K562 (cell line): ENCODE measurements at regions of chr10 and their contacts with region 1.

Region 1: DNA sequence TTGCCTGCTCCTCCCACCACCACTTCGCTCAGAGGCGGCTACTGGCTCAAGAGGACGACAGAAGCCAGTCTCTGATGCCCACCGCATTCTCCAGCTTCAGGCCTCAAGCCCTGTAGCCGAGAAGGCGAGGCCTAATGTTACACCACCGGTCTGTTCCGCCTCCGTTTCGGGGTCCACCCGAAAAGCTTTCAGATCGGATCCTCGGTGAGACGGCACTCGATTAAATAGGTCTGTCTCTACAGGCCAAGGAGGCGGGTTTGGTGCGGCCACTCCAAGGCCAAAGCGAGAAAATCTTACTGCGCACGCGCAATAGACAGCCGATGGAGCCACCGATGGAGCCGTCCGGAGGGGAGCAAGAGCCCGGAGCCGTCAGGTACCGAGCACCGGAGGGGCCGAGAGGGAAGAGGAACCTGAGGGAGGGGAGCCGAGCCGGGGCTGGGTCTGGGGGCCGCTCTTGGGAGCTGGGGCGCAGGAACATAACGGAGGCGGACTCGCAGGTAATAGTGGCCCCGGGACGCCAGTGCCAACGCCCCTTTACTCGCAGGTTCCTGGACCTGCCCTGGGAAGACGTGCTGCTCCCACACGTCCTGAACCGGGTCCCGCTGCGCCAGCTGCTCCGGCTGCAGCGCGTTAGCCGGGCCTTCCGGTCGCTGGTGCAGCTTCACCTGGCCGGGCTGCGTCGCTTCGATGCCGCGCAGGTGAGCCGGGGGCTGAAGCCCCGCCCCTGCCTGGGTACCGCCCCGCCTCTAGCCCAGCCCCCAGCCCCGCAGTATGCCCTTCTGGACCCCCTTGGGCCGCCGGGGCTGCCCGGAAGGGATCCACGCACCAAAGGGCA is at the start of gene FBXL15:
- DNase-seq: peak; percentile 76 to 96 (median 84)
- ATAC-seq: peak; percentile 67
- H3K4me3 ChIP-seq: peak within 1 kb of the TSS; percentile 93
- H3K27ac ChIP-seq: peak within 1 kb of the TSS; percentile 80
- H3K4me1 ChIP-seq: peaks cover 12 to 59% of the 10 kb centered on the region in 2 experiments; a peak in 4 of 5 replicates
- H3K27me3 ChIP-seq: no peaks in the 10 kb centered on the region
- CTCF ChIP-seq: no peak
- EP300 ChIP-seq: 0 out of 2 replicates have a peak, but pooled peaks have one; percentile 26
- POLR2A ChIP-seq: peak; percentile 71
- RAD21 ChIP-seq: no peak
- polyA plus RNA-seq, gene FBXL15: 0.08 to 0.31 TPM

Region 2: DNA sequence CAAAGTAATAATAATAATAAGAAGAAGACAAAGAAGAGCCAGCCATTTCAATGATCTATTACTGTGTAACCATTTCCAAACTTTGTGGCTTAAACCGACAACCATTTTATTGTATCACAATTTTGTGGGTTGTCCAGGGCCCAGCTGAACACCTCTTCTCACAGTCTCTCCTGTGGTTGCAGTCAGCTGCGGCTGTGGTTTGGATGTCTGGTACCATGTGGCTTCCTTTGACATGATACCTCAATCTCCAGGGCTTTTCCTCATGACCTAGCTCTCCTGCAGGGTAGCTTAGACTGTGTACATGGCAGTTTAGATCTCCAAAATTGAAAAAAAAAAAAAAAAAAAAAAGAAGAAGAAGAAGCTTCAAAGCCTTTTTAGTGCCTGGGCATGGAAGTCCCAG is 98.1 kb before region 1 on chr10:
- CTCF ChIA-PET with region 1: no interaction called
- POLR2A ChIA-PET with region 1: no interaction called
- in situ Hi-C with region 1: no loop called
- intact Hi-C with region 1: no loop called
- DNase-seq: no peak
- ATAC-seq: no peak
- H3K4me3 ChIP-seq: no peak overlapping the region
- H3K27ac ChIP-seq: no peak overlapping the region
- H3K4me1 ChIP-seq: no peaks in the 10 kb centered on the region; a peak in 2 of 5 replicates
- H3K27me3 ChIP-seq: no peaks in the 10 kb centered on the region
- CTCF ChIP-seq: no peak
- EP300 ChIP-seq: no peak
- POLR2A ChIP-seq: no peak
- RAD21 ChIP-seq: no peak

Region 3: GRCh38 chr10:102368072-102368471 is 53.0 kb before region 1 on chr10:
- CTCF ChIA-PET with region 1: no interaction called
- POLR2A ChIA-PET with region 1: no interaction called
- in situ Hi-C with region 1: no loop called
- intact Hi-C with region 1: no loop called
- DNase-seq: no peak
- ATAC-seq: no peak
- H3K4me3 ChIP-seq: no peak overlapping the region
- H3K27ac ChIP-seq: no peak overlapping the region
- H3K4me1 ChIP-seq: no peaks in the 10 kb centered on the region
- H3K27me3 ChIP-seq: no peaks in the 10 kb centered on the region
- CTCF ChIP-seq: no peak
- EP300 ChIP-seq: no peak
- POLR2A ChIP-seq: no peak
- RAD21 ChIP-seq: no peak

Region 4: GRCh38 chr10:102394079-102394800 is 26.8 kb before region 1 on chr10:
- CTCF ChIA-PET with region 1: interaction called, 3 read pairs
- POLR2A ChIA-PET with region 1: interaction called, 6 read pairs
- in situ Hi-C with region 1: no loop called
- intact Hi-C with region 1: loop called (anchors 1 kb)
- DNase-seq: peak; percentile 87 to 93 (median 90)
- ATAC-seq: peak; percentile 93
- H3K4me3 ChIP-seq: peak overlapping the region; percentile 78
- H3K27ac ChIP-seq: peak overlapping the region; percentile 66
- H3K4me1 ChIP-seq: peaks cover 14 to 40% of the 10 kb centered on the region in 2 experiments; a peak in 4 of 5 replicates
- H3K27me3 ChIP-seq: no peaks in the 10 kb centered on the region
- CTCF ChIP-seq: peak in 1 of 3 experiments; percentile 95; a peak in 1 of 6 replicates
- EP300 ChIP-seq: no peak
- POLR2A ChIP-seq: peak; percentile 59; the same call in 1 of the 2 replicates
- RAD21 ChIP-seq: peak; percentile 76

Region 5: DNA sequence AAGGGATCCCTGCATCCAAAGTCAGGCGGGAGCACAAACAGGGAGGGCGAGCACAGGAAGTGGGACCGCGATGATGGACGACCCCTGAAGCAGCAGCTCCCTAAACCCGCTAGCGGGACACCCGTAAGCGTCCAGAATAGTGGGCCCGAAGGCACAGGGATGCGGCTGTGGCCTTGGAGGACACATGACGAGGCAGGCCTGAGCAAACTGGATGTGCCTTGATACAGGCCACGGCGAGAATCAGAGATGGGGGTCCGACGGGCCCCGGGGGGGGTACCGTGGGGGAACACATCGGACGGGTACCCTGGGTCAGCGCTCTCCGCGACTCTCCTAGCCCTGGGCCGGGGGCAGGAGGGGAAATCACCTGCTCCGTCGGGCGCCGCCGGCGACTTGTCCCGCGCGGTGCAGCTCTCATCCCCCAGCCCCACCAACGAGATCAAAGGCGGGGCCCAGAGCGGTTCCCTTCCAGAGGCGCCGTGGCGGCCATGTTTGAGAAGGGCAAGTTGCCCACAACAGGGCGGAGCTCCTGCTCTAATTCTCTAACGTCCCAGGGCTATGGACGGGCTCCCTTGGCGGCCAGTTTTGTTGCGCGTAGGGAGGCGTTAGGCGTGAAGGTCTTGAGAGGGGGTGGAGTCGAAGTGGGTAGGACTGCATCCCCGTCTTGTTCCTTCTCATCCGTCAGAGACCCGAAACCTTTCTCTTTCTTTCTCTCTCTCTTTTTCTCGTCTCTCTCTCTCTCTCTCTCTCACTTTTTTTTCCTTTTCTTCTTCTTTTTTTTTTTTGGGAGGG is 11.3 kb after region 1 on chr10 and contains the start of gene CUEDC2:
- CTCF ChIA-PET with region 1: no interaction called
- POLR2A ChIA-PET with region 1: interaction called, 34 read pairs
- in situ Hi-C with region 1: no loop called
- intact Hi-C with region 1: no loop called
- DNase-seq: peak; percentile 78 to 97 (median 84)
- ATAC-seq: peak; percentile 85
- H3K4me3 ChIP-seq: peak within 1 kb of the TSS; percentile 55
- H3K27ac ChIP-seq: peak within 1 kb of the TSS; percentile 88
- H3K4me1 ChIP-seq: peaks cover 23 to 31% of the 10 kb centered on the region in 2 experiments
- H3K27me3 ChIP-seq: no peaks in the 10 kb centered on the region
- CTCF ChIP-seq: no peak; a peak in 1 of 6 replicates
- EP300 ChIP-seq: peak; percentile 40; the same call in 1 of the 2 replicates
- POLR2A ChIP-seq: peak; percentile 79
- RAD21 ChIP-seq: no peak
- polyA plus RNA-seq, gene CUEDC2: 8.5 to 17.0 TPM

Region 6: GRCh38 chr10:102450194-102450938 is 29.3 kb after region 1 on chr10:
- CTCF ChIA-PET with region 1: no interaction called
- POLR2A ChIA-PET with region 1: interaction called, 11 read pairs
- in situ Hi-C with region 1: no loop called
- intact Hi-C with region 1: no loop called
- DNase-seq: peak; percentile 74 to 86 (median 77)
- ATAC-seq: peak; percentile 71
- H3K4me3 ChIP-seq: peak overlapping the region; percentile 80
- H3K27ac ChIP-seq: peak overlapping the region; percentile 95
- H3K4me1 ChIP-seq: peaks cover 27 to 40% of the 10 kb centered on the region in 2 experiments
- H3K27me3 ChIP-seq: no peaks in the 10 kb centered on the region
- CTCF ChIP-seq: no peak
- EP300 ChIP-seq: no peak
- POLR2A ChIP-seq: peak; percentile 69
- RAD21 ChIP-seq: 0 out of 4 replicates have a peak, but pooled peaks of 1 of the 2 experiments have one; percentile 7

Region 7: DNA sequence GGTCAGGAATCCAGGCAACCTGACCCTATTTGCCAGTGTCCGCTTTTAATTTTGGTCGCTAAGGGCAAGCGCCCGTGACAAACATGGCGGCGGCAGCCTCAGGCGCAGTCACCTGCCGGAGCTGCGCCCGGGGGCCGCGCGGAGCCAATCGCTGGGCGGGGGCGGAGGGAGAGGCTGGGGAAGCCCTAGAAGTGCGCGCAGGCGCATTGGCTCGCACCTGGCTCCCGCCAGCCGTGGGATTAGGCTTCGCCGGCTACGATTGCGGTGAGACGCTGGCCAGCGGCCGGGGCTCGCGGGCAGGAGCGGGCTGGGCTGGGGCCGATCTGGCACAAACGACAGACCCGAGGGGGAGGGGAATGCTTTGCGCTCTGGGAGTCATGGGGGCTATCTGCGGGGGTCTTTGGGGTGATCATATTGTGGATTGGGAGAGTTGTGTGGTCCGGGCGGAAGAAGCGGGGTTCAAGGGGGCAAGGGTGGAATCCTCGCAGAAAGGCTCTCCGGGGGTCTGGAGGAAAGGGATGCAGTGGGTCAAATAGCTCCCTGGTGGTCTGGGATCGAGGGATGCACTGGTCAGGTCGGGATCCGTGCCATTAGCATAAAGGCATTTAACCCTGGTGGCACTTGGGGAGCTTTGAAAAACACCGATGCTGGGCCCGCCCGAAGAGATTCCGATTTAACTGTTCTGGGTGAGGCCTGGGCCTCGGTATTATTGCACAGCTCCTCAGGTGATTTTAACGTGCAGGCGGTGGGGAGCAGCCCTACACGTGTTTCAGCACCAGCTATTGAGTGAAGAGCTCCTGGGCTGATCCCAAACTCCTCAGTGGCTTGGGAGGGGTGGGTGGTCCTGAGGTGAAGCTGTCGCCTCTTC is 40.4 kb after region 1 on chr10:
- CTCF ChIA-PET with region 1: no interaction called
- POLR2A ChIA-PET with region 1: interaction called, 4 read pairs
- in situ Hi-C with region 1: no loop called
- intact Hi-C with region 1: loop called (anchors 5 kb)
- DNase-seq: peak; percentile 94 to 97 (median 96)
- ATAC-seq: peak; percentile 91
- H3K4me3 ChIP-seq: peak overlapping the region; percentile 41
- H3K27ac ChIP-seq: peak overlapping the region; percentile 73
- H3K4me1 ChIP-seq: peaks cover 21 to 26% of the 10 kb centered on the region in 2 experiments
- H3K27me3 ChIP-seq: no peaks in the 10 kb centered on the region
- CTCF ChIP-seq: no peak
- EP300 ChIP-seq: no peak
- POLR2A ChIP-seq: peak; percentile 55; the same call in 1 of the 2 replicates
- RAD21 ChIP-seq: no peak

Region 8: DNA sequence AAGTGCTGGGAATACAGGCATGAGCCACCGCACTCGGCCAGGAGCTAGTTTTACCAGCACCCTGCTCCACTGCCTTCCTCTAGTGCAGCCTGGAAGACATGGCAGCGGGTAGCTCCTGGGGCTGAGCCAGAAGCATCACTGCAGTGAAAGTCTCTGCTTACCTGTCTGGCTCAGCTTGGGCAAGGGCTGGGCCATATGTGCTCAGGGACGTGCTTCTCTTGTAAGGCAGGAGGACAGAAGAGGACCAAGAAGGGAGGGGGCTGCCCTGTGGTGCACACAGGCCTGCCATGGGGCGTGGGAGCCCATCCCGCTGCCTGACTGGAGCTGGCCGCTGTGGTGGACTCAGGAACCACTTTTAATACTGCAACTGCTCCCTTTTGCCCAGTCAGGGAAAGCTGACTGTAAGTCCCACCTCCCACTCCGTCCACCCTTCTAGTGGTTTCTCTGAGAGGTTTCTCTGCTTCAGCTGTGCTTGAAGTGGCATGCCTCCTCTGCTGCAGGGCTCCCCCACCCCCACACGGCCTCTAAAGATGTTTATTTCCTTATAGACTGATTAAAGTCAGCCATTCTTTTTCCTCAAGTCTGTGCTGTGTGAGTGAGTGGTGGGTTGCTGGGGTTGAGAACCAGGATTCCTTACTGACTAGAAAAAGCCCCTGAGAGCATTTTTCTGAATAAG is 55.6 kb after region 1 on chr10:
- CTCF ChIA-PET with region 1: no interaction called
- POLR2A ChIA-PET with region 1: interaction called, 5 read pairs
- in situ Hi-C with region 1: no loop called
- intact Hi-C with region 1: loop called (anchors 1 kb)
- DNase-seq: no peak
- ATAC-seq: no peak
- H3K4me3 ChIP-seq: no peak overlapping the region
- H3K27ac ChIP-seq: no peak overlapping the region
- H3K4me1 ChIP-seq: peaks cover 4 to 9% of the 10 kb centered on the region in 2 experiments; a peak in 4 of 5 replicates
- H3K27me3 ChIP-seq: no peaks in the 10 kb centered on the region
- CTCF ChIP-seq: no peak
- EP300 ChIP-seq: no peak
- POLR2A ChIP-seq: no peak
- RAD21 ChIP-seq: no peak

Region 9: GRCh38 chr10:103517234-103518085 is 1096.4 kb after region 1 on chr10:
- CTCF ChIA-PET with region 1: no interaction called
- POLR2A ChIA-PET with region 1: no interaction called
- in situ Hi-C with region 1: no loop called
- intact Hi-C with region 1: no loop called
- DNase-seq: no peak
- ATAC-seq: no peak
- H3K4me3 ChIP-seq: no peak overlapping the region
- H3K27ac ChIP-seq: no peak overlapping the region
- H3K4me1 ChIP-seq: peaks cover 0 to 3% of the 10 kb centered on the region in 2 experiments; a peak in 2 of 5 replicates
- H3K27me3 ChIP-seq: peaks cover 0 to 14% of the 10 kb centered on the region in 2 experiments; a peak in 2 of 5 replicates
- CTCF ChIP-seq: no peak
- EP300 ChIP-seq: no peak
- POLR2A ChIP-seq: no peak
- RAD21 ChIP-seq: no peak